Activated naive CD4-positive, alpha-beta T cell treated with anti-CD3 and anti-CD28 coated beads, Interleukin-2, amount 10 ng/mL, durations not matched to agents 7 days and 5 days (primary cell): ENCODE measurements at regions of chr6 and their contacts with region 1.

Region 1: GRCh38 chr6:28838634-28839442 is 84.9 kb downstream of the TRIM27 start:
- DNase-seq: peak; percentile 83
- H3K4me3 Mint-ChIP-seq: peak overlapping the region; percentile 90
- H3K27ac Mint-ChIP-seq: peak overlapping the region; percentile 79
- H3K4me1 Mint-ChIP-seq: peaks cover 30% of the 10 kb centered on the region
- H3K27me3 Mint-ChIP-seq: peaks cover 48% of the 10 kb centered on the region

Region 2: DNA sequence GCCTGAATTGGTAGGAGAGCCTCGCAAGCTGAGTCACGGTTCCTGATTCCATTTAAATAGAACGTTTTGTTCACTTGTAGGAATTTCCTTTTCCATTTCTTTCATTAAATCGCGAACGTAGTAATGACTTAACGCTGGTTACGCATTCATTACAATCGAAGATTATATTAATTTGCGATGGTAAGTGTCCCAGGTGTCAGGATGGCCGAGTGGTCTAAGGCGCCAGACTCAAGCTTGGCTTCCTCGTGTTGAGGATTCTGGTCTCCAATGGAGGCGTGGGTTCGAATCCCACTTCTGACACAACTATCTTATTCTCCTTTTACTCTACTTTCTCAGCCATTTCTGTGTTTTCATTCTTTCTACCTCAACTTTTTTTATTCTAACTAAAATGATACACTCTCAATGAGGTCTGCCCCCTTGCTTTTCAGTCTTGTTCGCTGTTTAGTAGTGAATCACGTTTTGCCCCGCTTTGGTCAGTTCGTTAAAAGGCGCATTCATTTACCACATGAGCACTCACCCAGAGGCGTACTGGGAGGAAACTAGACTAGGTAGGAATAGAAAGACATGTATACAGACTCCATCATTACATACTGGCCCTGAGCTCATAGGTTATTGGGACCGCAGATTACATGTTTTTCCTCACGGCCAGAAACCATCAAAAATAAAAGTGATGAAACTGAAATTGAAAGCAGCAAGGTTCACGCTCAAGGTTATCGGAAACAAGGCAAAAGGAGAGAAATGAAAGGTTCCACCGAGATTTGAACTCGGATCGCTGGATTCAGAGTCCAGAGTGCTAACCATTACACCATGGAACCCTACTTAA is 102.2 kb after region 1 on chr6:
- CTCF ChIA-PET with region 1: interaction called, 17 read pairs
- DNase-seq: peak; percentile 79
- H3K4me3 Mint-ChIP-seq: peak overlapping the region; percentile 88
- H3K27ac Mint-ChIP-seq: peak overlapping the region; percentile 95
- H3K4me1 Mint-ChIP-seq: peaks cover 60% of the 10 kb centered on the region
- H3K27me3 Mint-ChIP-seq: peaks cover 4% of the 10 kb centered on the region

Region 3: DNA sequence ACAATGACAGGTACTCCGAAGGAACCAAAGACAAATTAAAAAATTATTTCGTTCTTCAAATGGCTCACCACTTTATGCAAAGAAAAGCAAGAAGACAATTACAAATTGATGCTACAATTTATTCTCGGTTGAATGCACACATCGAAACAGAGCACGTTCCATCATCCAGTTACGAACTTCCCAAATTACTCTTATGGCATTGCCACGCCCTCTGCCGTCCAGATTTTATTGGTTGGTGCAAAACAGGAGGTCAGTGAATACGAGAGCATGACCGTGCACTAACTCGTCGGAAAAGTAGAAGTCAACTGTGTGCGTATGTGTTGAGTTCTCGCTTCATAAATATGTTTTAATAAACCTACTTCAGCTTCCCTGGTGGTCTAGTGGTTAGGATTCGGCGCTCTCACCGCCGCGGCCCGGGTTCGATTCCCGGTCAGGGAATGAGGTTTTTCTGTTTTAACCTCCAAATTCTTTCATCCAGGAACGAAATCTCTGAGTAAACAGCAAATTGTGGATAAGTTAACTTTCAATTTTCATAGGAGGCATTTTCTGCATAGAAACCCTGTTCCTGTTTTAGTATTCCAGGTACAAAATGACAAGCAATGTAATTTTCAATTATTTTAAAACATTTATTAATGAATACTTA is 143.1 kb after region 1 on chr6:
- CTCF ChIA-PET with region 1: interaction called, 18 read pairs
- DNase-seq: peak; percentile 73
- H3K4me3 Mint-ChIP-seq: peak overlapping the region; percentile 80
- H3K27ac Mint-ChIP-seq: peak overlapping the region; percentile 91
- H3K4me1 Mint-ChIP-seq: peaks cover 67% of the 10 kb centered on the region
- H3K27me3 Mint-ChIP-seq: peaks cover 68% of the 10 kb centered on the region

Region 4: GRCh38 chr6:29011276-29011734 is 172.5 kb after region 1 on chr6:
- CTCF ChIA-PET with region 1: interaction called, 56 read pairs
- DNase-seq: peak; percentile 69
- H3K4me3 Mint-ChIP-seq: peak overlapping the region; percentile 82
- H3K27ac Mint-ChIP-seq: no peak overlapping the region
- H3K4me1 Mint-ChIP-seq: peaks cover 28% of the 10 kb centered on the region
- H3K27me3 Mint-ChIP-seq: peaks cover 16% of the 10 kb centered on the region

Region 5: GRCh38 chr6:29016559-29017427 is 178.0 kb after region 1 on chr6:
- CTCF ChIA-PET with region 1: interaction called, 56 read pairs
- DNase-seq: peak; percentile 88
- H3K4me3 Mint-ChIP-seq: peak overlapping the region; percentile 85
- H3K27ac Mint-ChIP-seq: peak overlapping the region; percentile 88
- H3K4me1 Mint-ChIP-seq: peaks cover 26% of the 10 kb centered on the region
- H3K27me3 Mint-ChIP-seq: peaks cover 23% of the 10 kb centered on the region